ENCODE measurements at regions of chr4 and their contacts with region 1.

Region 1: DNA sequence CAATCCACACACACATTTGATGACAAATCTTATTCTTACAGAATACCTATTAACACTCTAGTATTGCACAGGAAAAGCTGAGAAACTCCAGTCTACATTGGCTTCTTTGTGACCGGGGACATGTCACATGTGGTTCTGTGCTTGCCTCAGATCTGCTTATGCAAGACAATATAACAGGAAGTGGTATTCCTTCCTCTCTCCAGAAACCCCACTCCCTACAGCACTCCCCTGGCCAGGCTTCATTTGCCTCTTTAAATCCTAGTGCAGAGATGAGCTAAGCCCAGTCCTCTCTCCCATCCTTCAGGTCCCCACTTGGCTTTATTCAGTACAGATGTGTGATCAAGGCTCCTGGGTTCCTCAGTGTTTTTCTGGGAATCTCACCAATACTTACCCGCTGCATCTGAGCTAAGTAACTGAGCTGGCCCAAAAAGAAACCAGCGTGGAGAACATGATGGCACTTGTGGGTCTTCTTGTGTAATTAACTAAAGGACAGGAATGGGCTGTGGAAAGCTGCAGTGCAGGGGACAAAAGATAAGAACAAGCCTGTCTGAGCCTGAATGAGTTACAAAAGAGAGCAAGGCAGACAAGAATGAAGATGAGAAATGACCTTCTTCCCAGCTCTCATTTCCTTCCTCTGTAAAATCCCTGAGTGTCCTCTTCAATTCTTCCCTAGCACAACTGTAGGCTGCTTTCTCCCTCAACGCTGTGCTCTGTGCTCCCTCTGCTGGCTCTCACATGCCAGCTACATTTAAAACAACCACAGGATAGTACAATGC is 105.6 kb downstream of the HNRNPD start:
- DNase-seq: peak; percentile 30 to 40
- H3K4me3 ChIP-seq: no peak overlapping the region
- H3K27ac ChIP-seq: peak overlapping the region in 1 of 2 donors; percentile 21
- H3K4me1 ChIP-seq: no peaks in the 10 kb centered on the region
- H3K27me3 ChIP-seq: no peaks in the 10 kb centered on the region
- CTCF ChIP-seq: peak; percentile 45 to 68 (median 60)
- POLR2A ChIP-seq: no peak

Region 2: GRCh38 chr4:81405894-81406401 is 862.3 kb before region 1 on chr4:
- intact Hi-C with region 1: loop called (anchors 10 kb)
- DNase-seq: peak in 1 of 2 donors; percentile 37
- H3K4me3 ChIP-seq: no peak overlapping the region
- H3K27ac ChIP-seq: no peak overlapping the region
- H3K4me1 ChIP-seq: no peaks in the 10 kb centered on the region
- H3K27me3 ChIP-seq: no peaks in the 10 kb centered on the region
- CTCF ChIP-seq: peak; percentile 64 to 86 (median 70)
- POLR2A ChIP-seq: no peak

Region 3: DNA sequence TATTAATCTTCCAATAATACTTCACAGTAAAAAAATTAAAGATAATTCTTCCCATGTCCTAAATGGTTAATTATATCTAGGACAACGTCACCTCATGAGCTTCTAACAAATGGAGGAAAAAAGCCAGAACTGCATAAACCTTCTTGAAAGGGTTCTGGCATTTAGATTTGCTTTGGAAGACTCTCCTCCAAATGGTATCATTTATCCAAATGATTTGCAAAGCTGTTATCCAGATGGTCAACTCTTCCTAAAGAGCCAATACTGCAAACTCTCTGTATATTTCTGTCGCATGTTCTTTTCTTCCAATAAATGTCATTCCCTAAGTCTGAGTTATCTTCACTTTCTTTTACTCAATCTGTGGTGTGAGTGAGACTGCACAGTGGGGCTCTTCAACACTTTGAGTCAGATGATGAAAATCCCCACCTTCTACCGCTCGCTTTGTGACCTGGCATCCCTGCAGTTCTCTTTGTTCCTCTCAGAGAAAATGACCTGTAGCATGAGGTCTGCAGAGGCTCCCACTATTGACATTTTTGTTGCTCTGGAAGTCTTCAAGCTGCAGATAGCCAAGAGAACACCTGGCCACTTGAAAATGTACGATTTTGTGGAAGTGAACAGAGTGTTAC is 240.7 kb after region 1 on chr4:
- intact Hi-C with region 1: no loop called
- DNase-seq: no peak
- H3K4me3 ChIP-seq: no peak overlapping the region
- H3K27ac ChIP-seq: no peak overlapping the region
- H3K4me1 ChIP-seq: no peaks in the 10 kb centered on the region
- H3K27me3 ChIP-seq: no peaks in the 10 kb centered on the region
- CTCF ChIP-seq: no peak
- POLR2A ChIP-seq: no peak

Measured in uterus (tissue), 4 donors.